Activated naive CD4-positive, alpha-beta T cell treated with anti-CD3 and anti-CD28 coated beads for 36 hours (primary cell): ENCODE measurements at regions of chr5 and their contacts with region 1.

Region 1: GRCh38 chr5:32585446-32586275 is at the start of gene SUB1:
- DNase-seq: peak; percentile 94
- H3K4me3 Mint-ChIP-seq: peak within 1 kb of the TSS; percentile 99
- H3K27ac Mint-ChIP-seq: peak within 1 kb of the TSS; percentile 99
- H3K4me1 Mint-ChIP-seq: peaks cover 54% of the 10 kb centered on the region
- H3K27me3 Mint-ChIP-seq: no peaks in the 10 kb centered on the region
- total RNA-seq, gene SUB1: 397 to 400 TPM

Region 2: GRCh38 chr5:30725073-30725472 is 1860.6 kb before region 1 on chr5:
- CTCF ChIA-PET with region 1: no interaction called
- intact Hi-C with region 1: no loop called
- DNase-seq: no peak
- H3K4me3 Mint-ChIP-seq: no peak overlapping the region
- H3K27ac Mint-ChIP-seq: no peak overlapping the region
- H3K4me1 Mint-ChIP-seq: no peaks in the 10 kb centered on the region
- H3K27me3 Mint-ChIP-seq: no peaks in the 10 kb centered on the region

Region 3: DNA sequence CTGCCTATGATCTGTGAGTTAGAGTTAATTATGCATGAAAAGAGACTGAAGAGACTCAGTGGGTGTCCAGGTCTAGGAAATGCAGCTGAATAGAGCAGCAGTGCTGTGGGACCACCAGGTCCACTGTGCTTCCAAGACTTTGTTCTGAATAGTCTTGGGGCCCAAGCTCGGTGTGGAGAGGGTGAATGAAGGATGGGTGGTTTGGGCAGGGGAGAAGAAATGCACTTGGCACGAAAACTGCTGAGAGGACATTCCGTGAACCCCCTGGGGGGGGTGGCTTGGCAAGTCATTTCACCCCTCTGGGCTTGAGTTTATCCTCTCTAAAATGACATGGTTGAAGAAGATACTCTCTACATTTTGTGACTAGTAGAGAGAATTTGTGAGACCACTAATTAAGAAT is 375.5 kb before region 1 on chr5:
- CTCF ChIA-PET with region 1: no interaction called
- intact Hi-C with region 1: loop called (anchors 2 kb)
- DNase-seq: no peak
- H3K4me3 Mint-ChIP-seq: no peak overlapping the region
- H3K27ac Mint-ChIP-seq: peak overlapping the region; percentile 91
- H3K4me1 Mint-ChIP-seq: peaks cover 19% of the 10 kb centered on the region
- H3K27me3 Mint-ChIP-seq: no peaks in the 10 kb centered on the region

Region 4: GRCh38 chr5:32443541-32444430 is 141.9 kb before region 1 on chr5:
- CTCF ChIA-PET with region 1: interaction called, 7 read pairs
- intact Hi-C with region 1: loop called (anchors 1 kb)
- DNase-seq: peak; percentile 50
- H3K4me3 Mint-ChIP-seq: peak overlapping the region; percentile 93
- H3K27ac Mint-ChIP-seq: peak overlapping the region; percentile 96
- H3K4me1 Mint-ChIP-seq: peaks cover 35% of the 10 kb centered on the region
- H3K27me3 Mint-ChIP-seq: no peaks in the 10 kb centered on the region

Region 5: GRCh38 chr5:32498484-32498883 is 87.2 kb before region 1 on chr5:
- CTCF ChIA-PET with region 1: interaction called, 22 read pairs
- intact Hi-C with region 1: no loop called
- DNase-seq: no peak
- H3K4me3 Mint-ChIP-seq: no peak overlapping the region
- H3K27ac Mint-ChIP-seq: no peak overlapping the region
- H3K4me1 Mint-ChIP-seq: peaks cover 12% of the 10 kb centered on the region
- H3K27me3 Mint-ChIP-seq: no peaks in the 10 kb centered on the region

Region 6: GRCh38 chr5:32542216-32543059 is 43.2 kb before region 1 on chr5:
- CTCF ChIA-PET with region 1: interaction called, 15 read pairs
- intact Hi-C with region 1: loop called (anchors 1 kb)
- DNase-seq: peak; percentile 51
- H3K4me3 Mint-ChIP-seq: no peak overlapping the region
- H3K27ac Mint-ChIP-seq: peak overlapping the region; percentile 79
- H3K4me1 Mint-ChIP-seq: peaks cover 40% of the 10 kb centered on the region
- H3K27me3 Mint-ChIP-seq: no peaks in the 10 kb centered on the region

Region 7: GRCh38 chr5:32785611-32786216 is 200.1 kb after region 1 on chr5:
- CTCF ChIA-PET with region 1: no interaction called
- intact Hi-C with region 1: no loop called
- DNase-seq: no peak
- H3K4me3 Mint-ChIP-seq: no peak overlapping the region
- H3K27ac Mint-ChIP-seq: no peak overlapping the region
- H3K4me1 Mint-ChIP-seq: no peaks in the 10 kb centered on the region
- H3K27me3 Mint-ChIP-seq: peaks cover 2% of the 10 kb centered on the region

Region 8: DNA sequence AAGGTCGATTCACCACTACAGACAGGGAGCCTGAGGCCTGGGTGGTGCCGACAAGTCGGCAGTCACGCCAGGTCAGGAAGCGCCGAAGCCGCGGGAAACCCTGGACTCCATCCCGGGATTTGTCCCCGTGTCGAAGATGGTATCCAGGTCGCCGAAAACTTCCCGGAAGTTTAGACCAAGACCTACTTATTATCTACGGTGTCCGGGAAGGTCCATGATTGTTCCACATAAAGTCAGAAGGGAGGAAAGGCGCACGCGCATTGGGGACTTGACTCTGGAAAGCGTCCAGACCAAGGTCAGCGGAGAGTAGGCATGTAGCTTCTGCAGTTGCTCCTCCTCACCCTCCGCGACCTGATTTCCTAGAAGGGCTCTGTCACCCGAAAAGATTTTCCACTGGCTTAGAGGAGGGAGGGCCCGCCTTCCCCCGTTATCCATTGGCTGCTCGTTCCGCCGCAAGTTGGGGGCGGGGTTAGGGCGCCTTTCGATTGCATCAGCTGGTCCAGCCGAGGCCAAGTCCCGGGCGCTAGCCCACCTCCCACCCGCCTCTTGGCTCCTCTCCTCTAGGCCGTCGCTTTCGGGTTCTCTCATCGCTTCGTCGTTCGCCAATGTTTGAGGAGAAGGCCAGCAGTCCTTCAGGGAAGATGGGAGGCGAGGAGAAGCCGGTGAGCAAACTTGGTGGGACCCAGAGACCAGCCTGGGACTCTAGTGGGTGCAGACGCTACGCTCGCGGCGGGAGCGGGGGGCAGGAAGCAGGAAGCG is 855.0 kb after region 1 on chr5 and contains the start of gene TARS1:
- CTCF ChIA-PET with region 1: no interaction called
- intact Hi-C with region 1: loop called (anchors 5 kb)
- DNase-seq: peak; percentile 96
- H3K4me3 Mint-ChIP-seq: no peak within 1 kb of the TSS
- H3K27ac Mint-ChIP-seq: no peak within 1 kb of the TSS
- H3K4me1 Mint-ChIP-seq: peaks cover 29% of the 10 kb centered on the region
- H3K27me3 Mint-ChIP-seq: no peaks in the 10 kb centered on the region
- total RNA-seq, gene TARS1: 244 to 260 TPM